Mammary epithelial cell (primary cell): ENCODE measurements at regions of chr20 and their contacts with region 1.

Region 1: DNA sequence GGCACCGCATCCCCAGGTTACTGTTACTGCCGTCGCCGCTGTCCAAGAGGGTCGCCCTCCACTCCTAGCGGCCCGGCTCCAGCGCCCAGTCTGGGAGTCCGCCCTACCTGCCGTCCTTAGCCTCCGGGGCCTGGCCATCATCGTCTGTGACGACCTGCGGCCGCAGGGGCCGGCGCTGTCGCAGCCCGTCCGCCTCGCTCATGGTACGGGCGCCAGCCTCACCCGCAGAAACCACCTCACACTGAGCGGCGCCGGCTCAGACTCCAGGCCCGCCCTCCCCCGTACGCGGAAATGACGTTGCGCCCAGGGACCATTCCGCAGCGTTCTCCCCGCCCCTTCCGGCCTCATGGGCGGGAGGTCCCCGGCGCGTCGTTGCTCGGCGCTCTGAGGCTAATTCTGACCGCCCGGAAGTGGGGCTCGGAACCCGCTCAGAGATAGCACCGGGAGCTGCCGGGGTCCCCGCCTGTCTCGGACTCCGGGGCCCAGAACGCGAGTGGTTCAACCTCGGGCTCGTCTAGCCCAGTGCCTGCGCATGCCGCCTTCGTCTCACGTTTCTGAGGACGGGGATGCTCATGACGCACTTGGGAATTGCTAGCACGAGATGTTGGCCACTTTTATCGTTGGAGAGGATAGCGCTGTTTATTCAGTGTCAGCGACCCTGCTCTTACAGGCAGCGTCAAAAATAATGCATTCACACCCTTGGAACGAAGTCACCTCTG is at the start of gene APMAP:
- DNase-seq: peak; percentile 91
- H3K4me3 ChIP-seq: peak within 1 kb of the TSS; percentile 85 to 98 (median 90)
- H3K27ac ChIP-seq: peak within 1 kb of the TSS; percentile 63
- H3K4me1 ChIP-seq: peaks cover 27% of the 10 kb centered on the region
- H3K27me3 ChIP-seq: no peaks in the 10 kb centered on the region
- CTCF ChIP-seq: no peak
- total RNA-seq, gene APMAP: 74.6 to 104 TPM

Region 2: GRCh38 chr20:23937303-23938117 is 1055.1 kb before region 1 on chr20:
- CTCF ChIA-PET with region 1: no interaction called
- dilution Hi-C with region 1: no loop called
- in situ Hi-C with region 1: no loop called
- intact Hi-C with region 1: loop called (anchors 2 kb)
- DNase-seq: peak; percentile 42
- H3K4me3 ChIP-seq: no peak overlapping the region
- H3K27ac ChIP-seq: no peak overlapping the region
- H3K4me1 ChIP-seq: no peaks in the 10 kb centered on the region
- H3K27me3 ChIP-seq: no peaks in the 10 kb centered on the region
- CTCF ChIP-seq: peak; percentile 62 to 74

Region 3: DNA sequence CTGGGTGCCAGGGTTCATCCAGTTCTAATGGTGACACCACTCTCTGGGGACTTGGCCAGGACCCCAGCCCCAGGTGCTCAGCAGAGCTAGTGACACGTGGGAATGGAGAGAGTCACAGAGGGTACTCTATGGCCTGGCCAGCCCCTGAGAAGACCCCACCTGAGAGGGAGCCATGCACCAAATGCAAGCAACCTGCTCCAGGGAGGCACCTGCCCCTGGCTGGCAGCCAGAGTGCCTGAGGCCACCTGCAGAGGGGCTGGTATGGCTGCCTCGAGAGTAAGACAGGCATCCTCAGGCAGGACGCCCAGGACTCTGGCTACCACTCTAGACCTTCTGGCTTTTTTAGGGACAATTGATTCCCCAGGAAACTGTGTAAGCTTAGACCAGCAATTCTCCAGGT is 82.2 kb before region 1 on chr20:
- CTCF ChIA-PET with region 1: no interaction called
- dilution Hi-C with region 1: no loop called
- in situ Hi-C with region 1: no loop called
- intact Hi-C with region 1: no loop called
- DNase-seq: no peak
- H3K4me3 ChIP-seq: no peak overlapping the region
- H3K27ac ChIP-seq: no peak overlapping the region
- H3K4me1 ChIP-seq: no peaks in the 10 kb centered on the region
- H3K27me3 ChIP-seq: no peaks in the 10 kb centered on the region
- CTCF ChIP-seq: no peak

Region 4: GRCh38 chr20:25065625-25066338 is 73.1 kb after region 1 on chr20:
- CTCF ChIA-PET with region 1: no interaction called
- dilution Hi-C with region 1: no loop called
- in situ Hi-C with region 1: loop called in 1 of 2 experiments (anchors 5 kb)
- intact Hi-C with region 1: loop called (anchors 1 kb)
- DNase-seq: peak; percentile 44
- H3K4me3 ChIP-seq: no peak overlapping the region
- H3K27ac ChIP-seq: no peak overlapping the region
- H3K4me1 ChIP-seq: no peaks in the 10 kb centered on the region
- H3K27me3 ChIP-seq: peaks cover 16% of the 10 kb centered on the region
- CTCF ChIP-seq: peak; percentile 82 to 84

Region 5: GRCh38 chr20:25247956-25248785 is 255.5 kb after region 1 on chr20 and contains the start of gene PYGB:
- CTCF ChIA-PET with region 1: no interaction called
- dilution Hi-C with region 1: no loop called
- in situ Hi-C with region 1: loop called in 1 of 2 experiments (anchors 10 kb)
- intact Hi-C with region 1: loop called (anchors 2 kb)
- DNase-seq: peak; percentile 89
- H3K4me3 ChIP-seq: peak within 1 kb of the TSS; percentile 91 to 98 (median 97)
- H3K27ac ChIP-seq: peak within 1 kb of the TSS; percentile 79
- H3K4me1 ChIP-seq: peaks cover 42% of the 10 kb centered on the region
- H3K27me3 ChIP-seq: no peaks in the 10 kb centered on the region
- CTCF ChIP-seq: no peak
- total RNA-seq, gene PYGB: 475 to 1,432 TPM

Region 6: GRCh38 chr20:25390538-25391528 is 398.2 kb after region 1 on chr20 and contains the start of gene ABHD12:
- CTCF ChIA-PET with region 1: no interaction called
- dilution Hi-C with region 1: no loop called
- in situ Hi-C with region 1: no loop called
- intact Hi-C with region 1: loop called (anchors 2 kb)
- DNase-seq: peak; percentile 97
- H3K4me3 ChIP-seq: peak within 1 kb of the TSS; percentile 63 to 97 (median 68)
- H3K27ac ChIP-seq: peak within 1 kb of the TSS; percentile 44
- H3K4me1 ChIP-seq: peaks cover 7% of the 10 kb centered on the region
- H3K27me3 ChIP-seq: no peaks in the 10 kb centered on the region
- CTCF ChIP-seq: no peak
- total RNA-seq, gene ABHD12: 21.2 to 21.6 TPM

Region 7: GRCh38 chr20:25623736-25624499 is 631.3 kb after region 1 on chr20 and contains the start of gene NANP:
- CTCF ChIA-PET with region 1: no interaction called
- dilution Hi-C with region 1: no loop called
- in situ Hi-C with region 1: no loop called
- intact Hi-C with region 1: loop called (anchors 5 kb)
- DNase-seq: peak; percentile 98
- H3K4me3 ChIP-seq: peak within 1 kb of the TSS; percentile 53 to 94 (median 87)
- H3K27ac ChIP-seq: peak within 1 kb of the TSS; percentile 83
- H3K4me1 ChIP-seq: peaks cover 18% of the 10 kb centered on the region
- H3K27me3 ChIP-seq: no peaks in the 10 kb centered on the region
- CTCF ChIP-seq: peak in 1 of 2 donors; percentile 25
- total RNA-seq, gene NANP: 7.5 TPM